Naive thymus-derived CD4-positive, alpha-beta T cell (primary cell): ENCODE measurements at regions of chr11 and their contacts with region 1.

Region 1: DNA sequence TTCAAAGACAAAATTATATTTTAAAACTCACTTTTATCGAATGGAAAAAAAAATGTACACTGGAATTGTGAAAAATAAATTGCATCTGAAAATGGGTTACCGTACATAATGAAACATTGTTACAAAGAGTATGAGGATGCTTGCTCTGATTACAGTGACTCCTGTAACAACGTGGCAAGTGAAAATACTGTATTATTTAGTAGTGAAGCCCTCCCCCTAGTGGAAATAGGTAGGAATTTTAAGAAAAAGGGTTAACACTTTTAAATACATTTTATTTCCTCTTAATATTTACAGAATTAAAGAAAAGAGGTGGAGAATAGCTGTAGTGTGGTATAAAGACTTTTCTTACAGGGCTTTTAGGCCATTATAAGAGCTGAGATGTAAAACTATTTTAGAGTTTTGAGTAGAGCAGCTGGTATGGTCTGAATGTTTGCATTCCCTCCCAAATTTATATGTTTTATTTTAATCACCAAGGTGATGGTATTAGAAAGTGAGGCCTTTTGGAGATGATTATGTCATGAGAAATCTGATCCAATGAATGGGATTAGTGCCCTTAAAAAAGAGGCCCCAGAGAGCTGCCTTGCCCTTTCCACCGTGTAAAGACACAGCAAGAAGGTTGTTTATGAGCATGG is 25.2 kb downstream of the FAM76B start:
- DNase-seq: peak in 7 of 9 donors; percentile 43 to 73 (median 68)
- ATAC-seq: peak; percentile 95
- H3K4me3 ChIP-seq: no peak overlapping the region
- H3K4me3 Mint-ChIP-seq: no peak overlapping the region
- H3K27ac ChIP-seq: no peak overlapping the region
- H3K27ac Mint-ChIP-seq: no peak overlapping the region
- H3K4me1 ChIP-seq: no peaks in the 10 kb centered on the region
- H3K4me1 Mint-ChIP-seq: peaks cover 0 to 9% (median 0%) of the 10 kb centered on the region in 7 donors
- H3K27me3 ChIP-seq: no peaks in the 10 kb centered on the region
- H3K27me3 Mint-ChIP-seq: peaks cover 0 to 19% (median 0%) of the 10 kb centered on the region in 5 donors

Region 2: GRCh38 chr11:95715777-95716241 is 48.6 kb before region 1 on chr11:
- CTCF ChIA-PET with region 1: interaction called, 3 read pairs
- POLR2A ChIA-PET with region 1: interaction called, 3 read pairs
- intact Hi-C with region 1: loop called in 1 of 2 experiments (anchors 2 kb)
- DNase-seq: peak in 1 of 9 donors; percentile 60
- ATAC-seq: peak; percentile 63
- H3K4me3 ChIP-seq: no peak overlapping the region
- H3K4me3 Mint-ChIP-seq: peak overlapping the region in 2 of 10 donors; percentile 1 to 56
- H3K27ac ChIP-seq: no peak overlapping the region
- H3K27ac Mint-ChIP-seq: peak overlapping the region in 6 of 9 donors; percentile 8 to 72 (median 26)
- H3K4me1 ChIP-seq: peaks cover 5 to 6% of the 10 kb centered on the region in 2 donors
- H3K4me1 Mint-ChIP-seq: peaks cover 11 to 45% (median 31%) of the 10 kb centered on the region in 7 donors
- H3K27me3 ChIP-seq: no peaks in the 10 kb centered on the region
- H3K27me3 Mint-ChIP-seq: peaks cover 0 to 7% (median 3%) of the 10 kb centered on the region in 5 donors